Posterior cingulate gyrus (tissue), 11 donors: ENCODE measurements at regions of chr2 and their contacts with region 1.

Region 1: GRCh38 chr2:137865954-137866540 is 98.2 kb upstream of the HNMT start:
- DNase-seq: peak in 8 of 10 donors; percentile 26 to 81 (median 56)

Region 2: GRCh38 chr2:138827426-138828054 is 961.5 kb after region 1 on chr2:
- intact Hi-C with region 1: loop called (anchors 2 kb)
- DNase-seq: peak in 1 of 10 donors; percentile 12